ENCODE measurements at regions of chr15 and their contacts with region 1.

Region 1: DNA sequence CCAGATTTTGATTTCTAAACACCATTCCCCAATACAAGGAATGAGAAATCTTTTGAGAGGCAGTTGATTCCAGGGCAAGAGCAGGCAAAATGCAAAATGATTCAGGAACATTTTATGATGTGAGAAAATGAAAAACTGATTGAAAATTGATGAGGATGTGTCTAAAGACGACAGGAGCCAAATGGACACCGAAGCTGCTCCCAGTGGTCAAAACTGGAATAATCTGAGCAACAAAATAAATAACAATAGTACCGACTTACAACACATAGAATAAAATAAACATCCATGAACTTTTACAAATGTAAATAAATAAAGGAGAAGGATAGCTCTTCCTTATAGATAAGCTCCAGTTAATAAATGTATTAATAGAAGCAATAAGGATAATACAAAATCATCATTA is 186.8 kb downstream of the OCA2 start:
- DNase-seq: no peak
- H3K4me3 ChIP-seq: no peak overlapping the region
- H3K27ac ChIP-seq: no peak overlapping the region
- H3K4me1 ChIP-seq: no peaks in the 10 kb centered on the region
- H3K27me3 ChIP-seq: no peaks in the 10 kb centered on the region
- CTCF ChIP-seq: no peak
- EP300 ChIP-seq: no peak
- POLR2A ChIP-seq: no peak

Region 2: DNA sequence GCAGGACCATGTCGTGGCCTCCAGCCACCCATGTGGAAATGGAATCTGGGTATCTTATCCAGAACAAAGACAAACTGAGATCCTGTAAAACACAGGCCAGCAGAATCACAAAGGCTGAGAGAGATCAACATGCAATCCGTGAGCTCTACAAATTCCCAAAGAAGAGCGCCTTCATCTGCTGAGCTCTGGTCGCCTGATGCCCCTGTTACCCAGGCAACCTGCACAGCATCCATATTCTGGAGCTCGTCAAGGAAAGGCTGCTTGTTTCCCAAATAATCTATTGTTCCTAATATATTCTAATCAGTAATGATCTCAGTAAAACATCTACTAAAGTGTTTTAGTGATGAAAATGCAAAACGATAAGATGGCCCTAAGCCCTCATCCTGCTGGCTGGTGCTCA is 53.3 kb after region 1 on chr15:
- in situ Hi-C with region 1: no loop called
- intact Hi-C with region 1: loop called (anchors 2 kb)
- DNase-seq: no peak
- H3K4me3 ChIP-seq: no peak overlapping the region
- H3K27ac ChIP-seq: no peak overlapping the region
- H3K4me1 ChIP-seq: no peaks in the 10 kb centered on the region
- H3K27me3 ChIP-seq: no peaks in the 10 kb centered on the region
- CTCF ChIP-seq: no peak
- EP300 ChIP-seq: no peak
- POLR2A ChIP-seq: no peak

Measured in transverse colon (tissue), 4 donors.